ENCODE measurements at regions of chr12 and their contacts with region 1.

Region 1: GRCh38 chr12:121005346-121005815 is 10.9 kb downstream of the C12orf43 start:
- DNase-seq: peak; percentile 66 to 69
- H3K4me3 ChIP-seq: no peak overlapping the region
- H3K4me3 Mint-ChIP-seq: no peak overlapping the region
- H3K27ac Mint-ChIP-seq: peak overlapping the region; percentile 37
- H3K4me1 ChIP-seq: no peaks in the 10 kb centered on the region
- H3K4me1 Mint-ChIP-seq: no peaks in the 10 kb centered on the region
- H3K27me3 ChIP-seq: no peaks in the 10 kb centered on the region
- H3K27me3 Mint-ChIP-seq: no peaks in the 10 kb centered on the region
- CTCF ChIP-seq: peak; percentile 61 to 64

Region 2: DNA sequence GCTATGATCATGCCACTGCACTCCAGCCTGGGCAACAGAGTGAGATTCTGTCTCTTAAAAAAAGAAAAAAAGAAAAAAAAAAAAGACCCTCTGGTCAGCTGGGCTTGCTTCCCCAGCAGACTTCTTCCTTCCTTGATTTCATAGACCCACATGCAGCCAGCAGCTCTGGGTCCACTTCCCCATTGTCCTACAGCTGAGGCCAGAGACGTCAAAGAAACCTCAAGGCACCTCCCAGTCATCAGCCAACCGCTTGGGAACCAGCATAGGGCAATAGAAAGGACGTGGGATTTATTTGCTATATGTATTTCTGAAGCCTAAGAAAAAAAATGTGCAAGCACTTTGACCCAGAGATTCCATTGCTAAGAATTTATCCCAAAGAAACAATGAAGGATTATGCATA is 65.9 kb before region 1 on chr12:
- CTCF ChIA-PET with region 1: interaction called, 4 read pairs
- POLR2A ChIA-PET with region 1: no interaction called
- intact Hi-C with region 1: loop called (anchors 1 kb)
- DNase-seq: no peak
- H3K4me3 ChIP-seq: no peak overlapping the region
- H3K4me3 Mint-ChIP-seq: no peak overlapping the region
- H3K27ac Mint-ChIP-seq: no peak overlapping the region
- H3K4me1 ChIP-seq: peaks cover 35% of the 10 kb centered on the region
- H3K4me1 Mint-ChIP-seq: peaks cover 16% of the 10 kb centered on the region
- H3K27me3 ChIP-seq: no peaks in the 10 kb centered on the region
- H3K27me3 Mint-ChIP-seq: no peaks in the 10 kb centered on the region
- CTCF ChIP-seq: no peak

Region 3: GRCh38 chr12:120944645-120945231 is 60.6 kb before region 1 on chr12:
- CTCF ChIA-PET with region 1: interaction called, 4 read pairs
- POLR2A ChIA-PET with region 1: no interaction called
- intact Hi-C with region 1: loop called (anchors 1 kb)
- DNase-seq: peak; percentile 69 to 83
- H3K4me3 ChIP-seq: no peak overlapping the region
- H3K4me3 Mint-ChIP-seq: peak overlapping the region; percentile 6
- H3K27ac Mint-ChIP-seq: peak overlapping the region; percentile 40
- H3K4me1 ChIP-seq: peaks cover 11% of the 10 kb centered on the region
- H3K4me1 Mint-ChIP-seq: peaks cover 6% of the 10 kb centered on the region
- H3K27me3 ChIP-seq: no peaks in the 10 kb centered on the region
- H3K27me3 Mint-ChIP-seq: no peaks in the 10 kb centered on the region
- CTCF ChIP-seq: peak; percentile 81 to 87

Region 4: GRCh38 chr12:120971299-120972179 is 33.8 kb before region 1 on chr12:
- CTCF ChIA-PET with region 1: interaction called, 11 read pairs
- POLR2A ChIA-PET with region 1: interaction called, 4 read pairs
- intact Hi-C with region 1: loop called (anchors 2 kb)
- DNase-seq: peak in 1 of 2 experiments; percentile 43
- H3K4me3 ChIP-seq: no peak overlapping the region
- H3K4me3 Mint-ChIP-seq: no peak overlapping the region
- H3K27ac Mint-ChIP-seq: no peak overlapping the region
- H3K4me1 ChIP-seq: peaks cover 36% of the 10 kb centered on the region
- H3K4me1 Mint-ChIP-seq: peaks cover 12% of the 10 kb centered on the region
- H3K27me3 ChIP-seq: no peaks in the 10 kb centered on the region
- H3K27me3 Mint-ChIP-seq: no peaks in the 10 kb centered on the region
- CTCF ChIP-seq: peak; percentile 45 to 68

Region 5: GRCh38 chr12:120978296-120979219 is 26.8 kb before region 1 on chr12 and contains the start of gene HNF1A:
- CTCF ChIA-PET with region 1: interaction called, 16 read pairs
- POLR2A ChIA-PET with region 1: interaction called, 5 read pairs
- intact Hi-C with region 1: loop called (anchors 2 kb)
- DNase-seq: peak; percentile 83 to 93
- H3K4me3 ChIP-seq: peak within 1 kb of the TSS; percentile 87
- H3K4me3 Mint-ChIP-seq: peak within 1 kb of the TSS; percentile 88
- H3K27ac Mint-ChIP-seq: peak within 1 kb of the TSS; percentile 71
- H3K4me1 ChIP-seq: peaks cover 49% of the 10 kb centered on the region
- H3K4me1 Mint-ChIP-seq: peaks cover 30% of the 10 kb centered on the region
- H3K27me3 ChIP-seq: no peaks in the 10 kb centered on the region
- H3K27me3 Mint-ChIP-seq: no peaks in the 10 kb centered on the region
- CTCF ChIP-seq: no peak
- total RNA-seq, gene HNF1A: 37.1 and 41.2 TPM in 2 replicates

Region 6: DNA sequence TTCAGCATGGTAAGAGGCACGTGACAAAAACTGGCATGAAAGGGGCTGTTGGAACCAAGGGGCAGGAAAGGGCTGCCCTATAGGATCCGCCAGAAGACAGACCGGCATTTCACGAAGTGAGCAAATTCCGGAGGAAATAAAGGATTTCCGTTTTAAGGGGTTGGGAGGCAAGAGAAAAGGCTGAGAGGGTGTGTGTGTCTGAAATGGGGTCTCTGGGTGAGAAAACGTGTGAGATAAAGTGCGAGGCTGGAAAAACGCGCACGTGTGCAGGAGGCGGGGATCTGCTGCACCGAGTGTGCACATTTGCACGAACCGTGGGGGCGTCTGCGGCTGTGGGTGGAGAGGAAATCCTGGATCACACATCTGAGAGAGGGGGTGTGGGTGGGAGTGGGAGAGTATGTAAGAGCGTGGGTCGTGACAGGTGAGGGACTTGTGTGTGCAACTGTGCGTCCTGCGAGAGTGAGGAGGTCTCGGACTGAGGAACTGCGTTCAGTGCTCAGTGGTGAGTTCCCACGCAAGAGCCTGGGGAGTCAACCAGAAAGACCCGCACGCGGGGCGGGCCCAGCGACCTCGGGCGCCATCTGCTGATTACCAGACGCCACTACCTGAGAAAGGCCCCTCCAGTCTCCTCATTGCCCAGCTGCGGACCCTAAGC is 90.3 kb after region 1 on chr12:
- CTCF ChIA-PET with region 1: interaction called, 6 read pairs
- POLR2A ChIA-PET with region 1: no interaction called
- intact Hi-C with region 1: loop called (anchors 1 kb)
- DNase-seq: peak; percentile 78 to 85
- H3K4me3 ChIP-seq: peak overlapping the region; percentile 46
- H3K4me3 Mint-ChIP-seq: peak overlapping the region; percentile 96
- H3K27ac Mint-ChIP-seq: peak overlapping the region; percentile 82
- H3K4me1 ChIP-seq: 0 out of 2 replicates have a peak, but pooled peaks cover 3% of the 10 kb centered on the region
- H3K4me1 Mint-ChIP-seq: peaks cover 9% of the 10 kb centered on the region
- H3K27me3 ChIP-seq: no peaks in the 10 kb centered on the region
- H3K27me3 Mint-ChIP-seq: no peaks in the 10 kb centered on the region
- CTCF ChIP-seq: peak; percentile 84 to 86

Region 7: DNA sequence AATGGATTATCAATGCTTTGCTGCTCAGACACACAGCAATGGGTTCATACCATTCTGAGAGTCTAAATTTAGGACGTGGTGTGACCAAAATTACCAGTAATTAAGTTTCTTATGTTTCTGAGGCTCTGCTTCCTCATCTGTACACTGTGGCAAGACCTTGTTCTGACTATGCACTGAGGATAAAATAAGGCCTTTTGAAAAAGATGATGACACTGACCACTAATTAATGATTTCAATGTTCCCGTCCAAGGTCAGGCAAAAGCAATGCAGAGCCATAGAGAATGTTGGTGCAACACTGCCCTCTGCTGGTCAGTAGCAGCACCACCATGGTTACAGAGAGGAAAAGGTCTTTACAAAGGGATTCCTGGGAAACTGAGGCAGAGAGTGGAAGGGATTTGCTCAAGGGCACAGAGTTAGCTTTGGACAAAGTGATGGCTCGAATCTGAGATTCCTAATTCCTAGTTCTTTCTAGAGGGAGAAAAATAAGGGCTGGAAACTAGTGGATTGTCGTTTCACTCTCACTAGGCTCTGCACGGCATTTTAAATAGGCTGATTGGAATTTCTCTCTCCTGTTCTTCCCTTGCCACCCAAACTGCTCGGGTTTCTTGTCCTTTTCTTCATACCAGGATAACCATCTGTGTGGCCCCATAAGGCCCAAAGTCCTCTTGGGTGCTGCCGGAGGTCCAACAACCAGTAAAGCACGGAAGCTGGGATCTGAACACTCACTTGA is 105.0 kb after region 1 on chr12:
- CTCF ChIA-PET with region 1: no interaction called
- POLR2A ChIA-PET with region 1: no interaction called
- intact Hi-C with region 1: loop called (anchors 5 kb)
- DNase-seq: peak; percentile 67 to 74
- H3K4me3 ChIP-seq: no peak overlapping the region
- H3K4me3 Mint-ChIP-seq: no peak overlapping the region
- H3K27ac Mint-ChIP-seq: no peak overlapping the region
- H3K4me1 ChIP-seq: no peaks in the 10 kb centered on the region
- H3K4me1 Mint-ChIP-seq: peaks cover 6% of the 10 kb centered on the region
- H3K27me3 ChIP-seq: no peaks in the 10 kb centered on the region
- H3K27me3 Mint-ChIP-seq: no peaks in the 10 kb centered on the region
- CTCF ChIP-seq: peak; percentile 84 to 94